ENCODE measurements at regions of chr9 and their contacts with region 1.

Region 1: GRCh38 chr9:97598461-97599288 is 34.5 kb downstream of the TSTD2 start:
- DNase-seq: peak; percentile 84
- ATAC-seq: peak; percentile 92
- H3K4me3 Mint-ChIP-seq: no peak overlapping the region
- H3K27ac Mint-ChIP-seq: no peak overlapping the region
- H3K4me1 Mint-ChIP-seq: peaks cover 8% of the 10 kb centered on the region
- H3K27me3 Mint-ChIP-seq: no peaks in the 10 kb centered on the region

Region 2: GRCh38 chr9:97386733-97387503 is 211.8 kb before region 1 on chr9:
- CTCF ChIA-PET with region 1: interaction called, 37 read pairs
- DNase-seq: peak; percentile 83
- ATAC-seq: peak; percentile 74
- H3K4me3 Mint-ChIP-seq: no peak overlapping the region
- H3K27ac Mint-ChIP-seq: no peak overlapping the region
- H3K4me1 Mint-ChIP-seq: peaks cover 34% of the 10 kb centered on the region
- H3K27me3 Mint-ChIP-seq: peaks cover 66% of the 10 kb centered on the region

Region 3: DNA sequence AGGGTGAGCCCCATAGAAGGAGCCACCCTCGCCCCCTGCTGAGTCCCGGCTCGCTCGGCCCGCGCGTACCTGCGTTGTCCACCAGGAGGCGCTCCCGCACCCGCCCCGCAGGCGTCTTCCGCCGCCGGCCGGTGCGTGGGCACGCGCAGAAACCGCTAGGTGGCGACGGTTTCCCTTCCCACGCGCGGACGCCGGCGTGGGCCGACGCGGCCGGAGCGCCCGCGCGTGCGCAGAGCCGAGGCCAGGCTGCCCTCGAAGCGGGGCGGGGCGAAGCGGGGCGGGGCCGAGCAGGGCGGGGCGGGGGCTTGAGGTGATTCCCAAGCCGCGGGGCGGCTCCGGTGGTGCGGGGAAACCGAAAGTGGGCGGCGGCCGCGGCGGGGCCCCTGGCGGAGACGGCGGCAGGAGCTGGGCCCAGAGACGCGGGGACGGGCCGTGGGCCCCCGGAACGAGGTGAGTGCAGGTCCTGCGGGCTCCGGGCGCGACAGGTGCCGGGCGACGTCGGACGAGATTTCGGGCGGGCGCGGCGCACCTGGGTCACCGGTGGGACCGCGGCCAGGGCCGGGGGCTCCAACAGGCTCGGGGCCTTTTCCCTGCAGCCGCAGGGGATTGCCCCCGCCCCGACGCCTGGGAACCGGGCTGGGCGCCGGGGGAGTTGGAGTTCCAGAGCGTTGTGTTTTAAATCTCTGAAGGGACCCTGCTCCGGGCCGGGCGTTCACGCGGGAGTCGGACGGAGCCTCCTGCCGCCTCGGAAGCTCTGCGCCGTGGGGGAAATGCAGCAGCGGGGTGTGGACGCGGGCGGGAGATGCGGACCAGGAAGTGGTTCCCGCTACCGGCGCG is 186.7 kb before region 1 on chr9 and contains the start of gene TDRD7:
- CTCF ChIA-PET with region 1: interaction called, 34 read pairs
- DNase-seq: peak; percentile 87
- ATAC-seq: peak; percentile 87
- H3K4me3 Mint-ChIP-seq: peak within 1 kb of the TSS; percentile 76
- H3K27ac Mint-ChIP-seq: peak within 1 kb of the TSS; percentile 64
- H3K4me1 Mint-ChIP-seq: peaks cover 22% of the 10 kb centered on the region
- H3K27me3 Mint-ChIP-seq: peaks cover 41% of the 10 kb centered on the region
- total RNA-seq, gene TDRD7: 10.3 to 15.3 TPM

Region 4: DNA sequence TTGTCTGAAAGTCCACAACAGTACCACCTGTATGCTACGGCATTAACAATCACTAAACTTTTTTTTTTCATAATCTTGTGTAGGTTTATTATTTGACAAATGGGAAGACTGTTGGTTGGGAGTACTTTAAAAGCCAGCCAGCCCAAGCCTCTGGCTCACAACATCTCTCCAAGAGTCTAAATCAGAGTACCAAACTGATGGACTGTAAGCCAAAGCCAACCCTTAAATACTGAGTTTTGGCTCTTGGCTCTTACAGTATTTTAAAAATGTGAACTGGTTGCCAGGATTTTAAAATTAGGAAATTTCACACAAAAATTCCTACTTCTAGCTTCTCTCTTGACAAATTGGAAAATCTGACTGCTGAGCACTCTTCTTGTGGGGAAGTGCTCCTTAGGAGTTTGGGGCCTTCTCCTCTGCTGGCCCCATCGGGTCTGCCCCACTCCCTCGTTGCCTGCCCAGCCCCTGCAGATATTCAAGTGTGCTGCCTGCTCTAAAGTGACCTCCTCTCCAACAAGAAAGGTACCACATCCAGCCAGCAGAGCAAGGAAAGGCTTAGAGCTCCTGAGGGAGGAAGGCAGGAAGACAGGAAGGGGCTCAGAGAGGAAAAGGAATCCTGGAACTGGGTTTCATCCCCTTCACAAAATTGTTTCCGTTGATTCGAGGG is 119.0 kb before region 1 on chr9:
- CTCF ChIA-PET with region 1: interaction called, 107 read pairs
- DNase-seq: no peak
- ATAC-seq: no peak
- H3K4me3 Mint-ChIP-seq: no peak overlapping the region
- H3K27ac Mint-ChIP-seq: no peak overlapping the region
- H3K4me1 Mint-ChIP-seq: no peaks in the 10 kb centered on the region
- H3K27me3 Mint-ChIP-seq: no peaks in the 10 kb centered on the region

Region 5: DNA sequence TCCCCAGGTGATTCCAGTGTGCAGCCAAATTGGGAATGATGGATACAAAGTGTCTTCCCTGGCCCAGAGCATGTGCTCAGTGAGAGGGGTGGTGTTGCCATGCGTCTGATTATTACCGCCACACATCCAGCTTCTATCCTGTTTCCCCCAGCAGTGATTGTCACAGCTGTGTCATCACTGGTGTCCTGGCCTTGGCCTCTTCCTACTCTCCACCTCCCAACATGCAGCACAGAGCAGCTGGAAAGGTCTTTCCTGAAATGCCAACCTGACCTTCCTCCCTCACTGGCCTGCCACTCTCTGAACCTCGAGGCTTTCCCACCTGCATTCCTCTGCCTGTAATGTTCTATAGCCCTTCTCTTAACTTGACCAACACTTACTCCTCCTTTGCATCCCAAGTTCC is 37.2 kb before region 1 on chr9:
- CTCF ChIA-PET with region 1: interaction called, 10 read pairs
- DNase-seq: peak; percentile 26
- ATAC-seq: no peak
- H3K4me3 Mint-ChIP-seq: no peak overlapping the region
- H3K27ac Mint-ChIP-seq: no peak overlapping the region
- H3K4me1 Mint-ChIP-seq: peaks cover 14% of the 10 kb centered on the region
- H3K27me3 Mint-ChIP-seq: peaks cover 30% of the 10 kb centered on the region

Region 6: GRCh38 chr9:97632985-97633858 is 34.5 kb after region 1 on chr9 and contains the starts of genes NCBP1 and TSTD2:
- CTCF ChIA-PET with region 1: interaction called, 13 read pairs
- DNase-seq: peak; percentile 98
- ATAC-seq: peak; percentile 93
- H3K4me3 Mint-ChIP-seq: peak within 1 kb of the TSS; percentile 97
- H3K27ac Mint-ChIP-seq: peak within 1 kb of the TSS; percentile 99
- H3K4me1 Mint-ChIP-seq: peaks cover 46% of the 10 kb centered on the region
- H3K27me3 Mint-ChIP-seq: no peaks in the 10 kb centered on the region
- total RNA-seq, gene NCBP1: 41.8 to 42.8 TPM
- total RNA-seq, gene TSTD2: 12.6 to 15.0 TPM